Dorsolateral prefrontal cortex (tissue), 120 donors: ENCODE measurements at regions of chr17 and their contacts with region 1.

Region 1: GRCh38 chr17:76264755-76265596 is at the start of gene UBALD2:
- DNase-seq: peak; percentile 99 to 100 (median 100)
- H3K4me3 ChIP-seq: peak within 1 kb of the TSS; percentile 69 to 98 (median 87)
- H3K27ac ChIP-seq: peak within 1 kb of the TSS; percentile 49 to 96 (median 89)
- H3K27me3 ChIP-seq: no peaks in the 10 kb centered on the region
- CTCF ChIP-seq: peak in 22 of 56 donors; percentile 4 to 50 (median 20)
- total RNA-seq, gene UBALD2: 23.4 to 76.2 (median 37.1) TPM

Region 2: GRCh38 chr17:76166168-76166567 is 98.8 kb before region 1 on chr17:
- intact Hi-C with region 1: loop called in 1 of 2 experiments (anchors 5 kb)
- DNase-seq: peak in 9 of 10 donors; percentile 46 to 93 (median 84)
- H3K4me3 ChIP-seq: peak overlapping the region in 14 of 59 donors; percentile 2 to 45 (median 20)
- H3K27ac ChIP-seq: peak overlapping the region; percentile 5 to 96 (median 86)
- H3K27me3 ChIP-seq: no peaks in the 10 kb centered on the region
- CTCF ChIP-seq: peak in 32 of 56 donors; percentile 9 to 58 (median 28)

Region 3: DNA sequence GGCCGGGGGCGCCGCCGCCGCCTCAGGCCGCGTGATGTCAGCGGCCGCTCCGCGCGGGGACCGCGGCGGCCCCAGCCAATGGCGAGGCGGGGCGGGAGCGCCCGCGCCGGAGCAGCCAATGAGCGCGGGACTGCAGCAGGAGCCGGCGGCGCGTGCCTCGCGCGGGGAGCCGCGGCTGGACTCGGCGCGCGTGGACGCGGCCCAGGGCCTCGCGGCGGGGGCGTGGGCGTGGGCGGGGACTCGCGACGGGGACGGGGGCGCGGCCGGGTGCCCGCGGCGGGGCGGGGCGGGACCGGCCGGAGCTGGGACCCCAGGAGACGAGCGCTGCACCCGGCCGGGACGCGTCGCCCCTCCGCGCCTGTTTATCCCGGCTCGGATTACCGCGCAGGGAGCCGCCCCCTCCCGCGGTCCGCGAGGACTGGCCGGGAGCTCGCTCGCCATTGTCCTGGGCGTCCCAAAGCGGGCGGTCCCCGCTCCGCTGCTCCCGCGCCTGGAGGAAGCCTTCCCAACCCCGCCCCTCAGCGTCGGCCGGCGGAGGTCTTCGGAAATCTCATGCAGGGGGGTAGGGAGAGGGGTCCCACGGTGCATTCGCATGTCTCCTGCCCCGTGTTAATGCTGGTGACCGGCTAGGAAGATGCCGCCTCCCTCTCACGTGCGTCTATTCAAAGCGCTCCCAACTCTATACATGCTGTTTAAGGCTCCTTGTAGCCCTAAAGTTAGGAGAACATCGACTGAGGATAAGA is 24.3 kb before region 1 on chr17 and contains the start of gene RNF157:
- intact Hi-C with region 1: loop called (anchors 1 to 2 kb)
- DNase-seq: peak; percentile 51 to 90 (median 70)
- H3K4me3 ChIP-seq: peak within 1 kb of the TSS; percentile 69 to 94 (median 84)
- H3K27ac ChIP-seq: peak within 1 kb of the TSS in 54 of 59 donors; percentile 2 to 89 (median 70)
- H3K27me3 ChIP-seq: no peaks in the 10 kb centered on the region
- CTCF ChIP-seq: no peak
- total RNA-seq, gene RNF157: 66.1 to 191 (median 137) TPM